Heart right ventricle (tissue), 16 donors: ENCODE measurements at regions of chr9 and their contacts with region 1.

Region 1: DNA sequence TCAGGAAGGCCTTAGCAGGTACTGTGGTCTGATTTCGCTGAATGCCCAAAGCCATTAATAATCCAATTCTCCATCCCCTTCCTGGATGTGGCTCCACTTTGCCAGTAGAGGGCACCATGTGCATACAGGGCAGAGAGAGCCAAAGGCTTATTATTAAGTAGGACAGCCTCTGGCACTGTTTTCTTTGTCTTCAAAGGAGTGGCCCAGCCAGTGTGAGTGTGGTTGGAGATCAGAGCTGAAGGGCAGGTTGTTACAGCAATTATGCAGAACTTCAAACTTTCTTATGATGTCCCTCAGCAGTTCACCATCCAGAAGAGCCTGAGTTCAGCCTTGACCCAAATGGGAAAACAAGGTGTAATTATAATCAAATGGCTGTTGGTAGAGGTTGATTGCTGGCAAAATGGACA is 38.6 kb upstream of the CEMIP2 start:
- DNase-seq: peak; percentile 26 to 72
- ATAC-seq: peak; percentile 86 to 99 (median 93)
- H3K4me3 ChIP-seq: no peak overlapping the region
- H3K27ac ChIP-seq: no peak overlapping the region
- H3K4me1 ChIP-seq: peaks cover 0 to 11% (median 5%) of the 10 kb centered on the region in 9 donors
- H3K27me3 ChIP-seq: no peaks in the 10 kb centered on the region
- CTCF ChIP-seq: peak; percentile 85 to 95 (median 89)

Region 2: GRCh38 chr9:71285191-71285656 is 521.7 kb before region 1 on chr9:
- intact Hi-C with region 1: loop called in 1 of 10 experiments (anchors 10 kb)
- DNase-seq: peak in 1 of 2 donors; percentile 46
- ATAC-seq: peak in 7 of 8 donors; percentile 49 to 74 (median 70)
- H3K4me3 ChIP-seq: no peak overlapping the region
- H3K27ac ChIP-seq: no peak overlapping the region
- H3K4me1 ChIP-seq: peaks cover 0 to 8% (median 0%) of the 10 kb centered on the region in 9 donors
- H3K27me3 ChIP-seq: no peaks in the 10 kb centered on the region
- CTCF ChIP-seq: peak; percentile 70 to 89 (median 83)

Region 3: DNA sequence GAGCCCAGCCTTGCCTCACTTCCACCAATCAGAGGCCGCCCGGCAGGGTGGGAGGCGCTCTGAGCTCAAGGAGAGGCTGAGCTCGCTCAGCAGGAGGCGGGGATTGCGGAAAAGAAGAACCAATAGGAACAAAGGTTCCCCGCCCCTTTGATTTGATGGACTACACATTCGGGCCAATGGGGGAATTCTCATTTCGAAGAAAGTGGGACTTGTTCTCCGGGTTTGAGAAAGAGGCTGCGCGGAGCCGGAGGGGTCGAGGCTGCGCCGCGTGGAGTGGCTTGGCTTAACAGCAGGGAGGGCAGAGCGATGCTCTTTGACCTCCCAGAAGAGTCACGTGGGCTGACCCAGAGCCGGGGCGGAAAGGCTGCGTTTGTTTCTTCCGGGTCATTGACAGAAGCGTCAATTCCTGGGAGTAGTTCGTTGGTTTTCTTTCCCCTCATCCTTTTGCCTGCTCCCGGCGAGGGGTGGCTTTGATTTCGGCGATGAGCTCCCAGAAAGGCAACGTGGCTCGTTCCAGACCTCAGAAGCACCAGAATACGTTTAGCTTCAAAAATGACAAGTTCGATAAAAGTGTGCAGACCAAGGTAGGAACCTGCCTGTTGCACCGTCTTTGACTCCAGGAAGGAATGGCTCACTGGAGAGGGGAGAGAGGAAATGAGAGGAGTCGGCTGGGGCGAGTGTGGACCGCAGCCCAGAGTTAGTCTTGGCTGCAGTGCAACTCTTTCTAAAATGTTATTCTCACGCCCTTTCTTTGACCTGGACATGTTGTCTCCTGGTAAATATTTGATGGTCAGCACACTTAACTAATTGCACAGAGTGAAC is 104.6 kb after region 1 on chr9 and contains the start of gene C9orf85:
- intact Hi-C with region 1: loop called in 3 of 10 experiments (anchors 5 to 10 kb)
- DNase-seq: peak; percentile 98 to 99
- ATAC-seq: peak; percentile 98 to 100 (median 99)
- H3K4me3 ChIP-seq: peak within 1 kb of the TSS; percentile 64 to 99 (median 94)
- H3K27ac ChIP-seq: peak within 1 kb of the TSS; percentile 82 to 98 (median 94)
- H3K4me1 ChIP-seq: peaks cover 0 to 63% (median 46%) of the 10 kb centered on the region in 9 donors
- H3K27me3 ChIP-seq: no peaks in the 10 kb centered on the region
- CTCF ChIP-seq: no peak
- total RNA-seq, gene C9orf85: 3.8 to 8.5 (median 6.1) TPM

Region 4: DNA sequence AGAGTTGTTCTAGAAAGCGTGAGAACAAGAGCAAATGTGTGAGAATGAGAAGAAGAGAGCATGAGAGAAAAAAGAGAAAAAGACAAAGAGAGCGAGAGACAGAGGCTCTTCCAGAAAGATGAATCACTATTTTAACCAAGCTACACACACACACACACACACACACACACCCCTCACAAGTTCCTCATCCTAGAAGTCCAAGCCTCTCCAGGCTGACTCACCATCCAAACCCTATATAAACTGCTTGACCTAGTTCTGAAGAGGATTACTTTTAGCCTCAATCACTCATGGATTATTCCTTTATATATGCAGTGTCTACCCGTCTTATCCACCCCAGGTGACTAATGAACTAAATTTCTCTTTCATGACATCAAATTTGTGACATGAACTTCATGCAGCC is 215.9 kb after region 1 on chr9:
- intact Hi-C with region 1: loop called (anchors 1 to 5 kb)
- DNase-seq: no peak
- ATAC-seq: no peak
- H3K4me3 ChIP-seq: no peak overlapping the region
- H3K27ac ChIP-seq: no peak overlapping the region
- H3K4me1 ChIP-seq: peaks cover 0 to 3% (median 0%) of the 10 kb centered on the region in 9 donors
- H3K27me3 ChIP-seq: no peaks in the 10 kb centered on the region
- CTCF ChIP-seq: no peak

Region 5: GRCh38 chr9:72262063-72262462 is 455.2 kb after region 1 on chr9:
- intact Hi-C with region 1: loop called in 1 of 10 experiments (anchors 10 kb)
- DNase-seq: no peak
- ATAC-seq: no peak
- H3K4me3 ChIP-seq: no peak overlapping the region
- H3K27ac ChIP-seq: no peak overlapping the region
- H3K4me1 ChIP-seq: no peaks in the 10 kb centered on the region
- H3K27me3 ChIP-seq: peaks cover 0 to 22% (median 4%) of the 10 kb centered on the region in 7 donors
- CTCF ChIP-seq: no peak

Region 6: DNA sequence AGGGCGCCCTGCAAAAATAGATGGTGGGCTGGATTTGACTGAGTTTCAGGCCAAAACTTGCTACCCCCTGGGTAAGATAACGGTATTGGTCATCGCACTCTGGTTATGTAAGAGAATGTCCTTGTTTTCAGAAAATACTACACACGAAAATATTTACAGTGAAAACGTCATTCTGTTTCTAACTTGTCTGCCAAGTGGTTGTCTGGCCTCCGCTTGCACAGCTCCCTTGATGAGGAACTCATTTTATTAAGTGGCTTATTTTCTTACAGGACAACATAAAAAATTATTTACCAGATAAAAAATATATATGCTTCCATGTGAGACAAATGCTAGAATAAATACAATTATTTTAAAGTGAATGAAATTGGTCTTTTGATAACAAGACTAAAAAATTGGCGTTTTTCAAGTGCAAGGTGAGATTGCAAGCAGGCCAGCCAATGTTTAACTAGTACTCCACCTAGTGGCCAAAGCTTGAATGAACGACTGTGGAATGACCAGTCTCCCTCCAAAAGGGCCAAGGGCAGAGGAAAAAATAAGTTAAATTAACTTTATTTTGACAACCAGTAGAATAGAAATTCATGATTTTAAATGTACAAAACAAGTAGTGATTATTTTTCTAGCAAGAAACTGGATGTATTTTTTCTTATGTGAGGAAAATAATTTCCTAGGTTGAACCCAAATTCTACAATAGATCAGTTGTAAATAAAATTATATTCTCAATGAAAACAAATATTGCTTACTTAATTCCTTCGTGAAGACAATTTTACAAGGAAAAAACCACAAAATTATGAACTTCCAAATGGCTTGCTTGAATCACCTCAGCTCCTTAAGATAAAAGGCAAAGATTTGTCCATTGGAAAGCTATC is 464.9 kb after region 1 on chr9:
- intact Hi-C with region 1: loop called in 5 of 10 experiments (anchors 5 to 10 kb)
- DNase-seq: peak in 1 of 2 donors; percentile 55
- ATAC-seq: peak in 1 of 8 donors; percentile 67
- H3K4me3 ChIP-seq: no peak overlapping the region
- H3K27ac ChIP-seq: no peak overlapping the region
- H3K4me1 ChIP-seq: no peaks in the 10 kb centered on the region
- H3K27me3 ChIP-seq: peaks cover 0 to 2% (median 0%) of the 10 kb centered on the region in 7 donors
- CTCF ChIP-seq: peak; percentile 66 to 95 (median 89)